ENCODE measurements at regions of chr5 and their contacts with region 1.

Region 1: GRCh38 chr5:111158105-111158744 is 66.0 kb upstream of the CAMK4 start:
- DNase-seq: peak; percentile 65
- H3K4me3 ChIP-seq: no peak overlapping the region
- H3K27ac ChIP-seq: no peak overlapping the region
- H3K4me1 ChIP-seq: no peaks in the 10 kb centered on the region
- H3K27me3 ChIP-seq: no peaks in the 10 kb centered on the region
- CTCF ChIP-seq: peak; percentile 100

Region 2: DNA sequence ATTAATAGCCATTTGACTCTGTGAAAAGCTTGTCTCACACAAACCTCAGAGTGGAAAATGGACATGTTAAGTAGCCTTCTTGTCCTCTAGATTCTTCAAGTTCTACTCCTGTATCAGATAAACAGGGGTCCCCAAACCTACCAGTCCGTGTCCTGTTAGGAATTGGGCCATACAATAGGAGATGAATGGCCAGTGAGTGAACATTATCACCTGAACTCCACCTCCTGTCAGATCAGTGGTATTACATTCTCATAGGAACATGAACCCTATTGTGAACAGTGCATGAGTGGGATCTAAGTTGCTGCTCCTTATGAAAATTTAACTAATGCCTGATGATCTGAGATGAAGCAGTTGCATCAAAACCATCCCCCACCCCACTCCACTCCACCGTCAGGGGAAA is 568.0 kb before region 1 on chr5:
- CTCF ChIA-PET with region 1: no interaction called
- dilution Hi-C with region 1: no loop called
- in situ Hi-C with region 1: no loop called
- intact Hi-C with region 1: no loop called
- DNase-seq: peak; percentile 5
- H3K4me3 ChIP-seq: no peak overlapping the region
- H3K27ac ChIP-seq: no peak overlapping the region
- H3K4me1 ChIP-seq: no peaks in the 10 kb centered on the region
- H3K27me3 ChIP-seq: peaks cover 4% of the 10 kb centered on the region
- CTCF ChIP-seq: peak; percentile 56 to 58

Region 3: DNA sequence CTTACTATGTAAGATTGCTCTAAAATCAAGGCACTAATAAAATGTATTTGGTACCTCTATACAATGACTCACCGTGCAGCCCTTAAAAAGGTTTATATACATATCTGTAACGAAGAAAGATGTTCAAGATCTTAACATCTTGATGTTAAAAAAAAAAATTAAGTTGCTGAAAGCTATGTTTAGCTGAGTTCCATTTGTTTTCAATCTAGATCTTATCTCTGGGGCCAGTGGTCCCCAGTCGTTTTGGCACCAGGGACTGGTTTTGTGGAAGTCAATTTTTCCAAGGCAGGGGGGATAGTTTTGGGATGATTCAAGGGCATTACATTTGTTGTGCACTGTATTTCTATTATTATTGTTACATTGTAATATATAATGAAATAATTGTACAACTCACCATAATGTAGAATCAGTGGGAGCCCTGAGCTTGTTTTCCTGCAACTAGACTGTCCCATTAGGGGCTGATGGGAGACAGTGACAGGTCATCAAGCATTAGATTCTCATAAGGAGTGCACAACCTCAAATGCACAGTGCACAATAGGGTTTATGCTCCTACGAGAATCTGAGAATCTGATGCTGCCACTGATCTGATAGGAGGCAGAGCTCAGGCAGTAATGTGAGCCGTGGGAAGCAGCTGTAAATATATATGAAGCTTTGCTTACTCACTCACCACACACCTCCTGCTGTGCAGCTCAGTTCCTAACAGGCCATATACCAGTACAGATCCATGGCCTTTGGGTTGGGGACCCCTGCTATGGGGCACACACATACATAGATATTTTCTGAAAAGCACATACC is 114.3 kb before region 1 on chr5:
- CTCF ChIA-PET with region 1: no interaction called
- dilution Hi-C with region 1: no loop called
- in situ Hi-C with region 1: no loop called
- intact Hi-C with region 1: no loop called
- DNase-seq: peak; percentile 16
- H3K4me3 ChIP-seq: no peak overlapping the region
- H3K27ac ChIP-seq: no peak overlapping the region
- H3K4me1 ChIP-seq: no peaks in the 10 kb centered on the region
- H3K27me3 ChIP-seq: no peaks in the 10 kb centered on the region
- CTCF ChIP-seq: no peak

Region 4: DNA sequence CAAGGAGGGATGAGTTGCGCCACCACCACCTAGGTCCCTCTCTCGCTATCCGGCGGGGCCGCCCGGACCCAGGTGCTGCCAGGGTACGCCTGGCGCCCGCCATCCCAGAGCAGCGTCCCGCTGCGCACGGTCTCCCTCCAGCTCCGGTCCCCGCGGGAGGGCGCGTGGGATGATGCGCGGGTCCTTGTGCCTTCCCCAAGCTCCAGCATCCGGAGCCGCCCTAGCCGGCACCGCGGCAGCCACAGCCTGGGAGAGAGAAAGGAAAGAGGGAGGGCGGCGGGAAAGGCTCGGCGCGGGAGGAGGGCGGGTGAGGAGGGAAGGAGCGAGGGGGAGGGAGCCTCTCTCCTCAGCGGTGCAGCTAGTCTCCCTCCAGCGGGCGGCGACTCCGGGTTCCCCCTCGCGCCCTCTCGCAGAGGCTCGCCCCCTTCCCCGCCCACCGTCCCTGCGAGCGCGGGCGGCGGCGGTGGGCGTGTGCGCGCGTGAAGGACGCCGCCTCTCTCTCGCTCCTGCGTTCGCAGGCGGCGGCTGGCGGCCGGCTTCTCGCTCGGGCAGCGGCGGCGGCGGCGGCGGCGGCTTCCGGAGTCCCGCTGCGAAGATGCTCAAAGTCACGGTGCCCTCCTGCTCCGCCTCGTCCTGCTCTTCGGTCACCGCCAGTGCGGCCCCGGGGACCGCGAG is 65.8 kb after region 1 on chr5 and contains the start of gene CAMK4:
- CTCF ChIA-PET with region 1: no interaction called
- dilution Hi-C with region 1: no loop called
- in situ Hi-C with region 1: no loop called
- intact Hi-C with region 1: loop called (anchors 5 kb)
- DNase-seq: peak; percentile 81
- H3K4me3 ChIP-seq: peak within 1 kb of the TSS; percentile 73 to 79 (median 77)
- H3K27ac ChIP-seq: no peak within 1 kb of the TSS
- H3K4me1 ChIP-seq: peaks cover 26% of the 10 kb centered on the region
- H3K27me3 ChIP-seq: no peaks in the 10 kb centered on the region
- CTCF ChIP-seq: peak in 1 of 2 donors; percentile 19
- total RNA-seq, gene CAMK4: 1.5 to 9.4 TPM

Region 5: GRCh38 chr5:111278845-111279504 is 120.8 kb after region 1 on chr5:
- CTCF ChIA-PET with region 1: no interaction called
- dilution Hi-C with region 1: no loop called
- in situ Hi-C with region 1: loop called in 1 of 2 experiments (anchors 5 kb)
- intact Hi-C with region 1: loop called (anchors 1 kb)
- DNase-seq: peak; percentile 35
- H3K4me3 ChIP-seq: no peak overlapping the region
- H3K27ac ChIP-seq: no peak overlapping the region
- H3K4me1 ChIP-seq: no peaks in the 10 kb centered on the region
- H3K27me3 ChIP-seq: no peaks in the 10 kb centered on the region
- CTCF ChIP-seq: peak; percentile 82 to 91

Region 6: GRCh38 chr5:111461255-111461671 is 303.0 kb after region 1 on chr5:
- CTCF ChIA-PET with region 1: interaction called, 8 read pairs
- dilution Hi-C with region 1: no loop called
- in situ Hi-C with region 1: loop called (anchors 10 to 25 kb)
- intact Hi-C with region 1: loop called (anchors 1 kb)
- DNase-seq: peak; percentile 38
- H3K4me3 ChIP-seq: no peak overlapping the region
- H3K27ac ChIP-seq: no peak overlapping the region
- H3K4me1 ChIP-seq: no peaks in the 10 kb centered on the region
- H3K27me3 ChIP-seq: no peaks in the 10 kb centered on the region
- CTCF ChIP-seq: peak; percentile 43 to 68

Region 7: DNA sequence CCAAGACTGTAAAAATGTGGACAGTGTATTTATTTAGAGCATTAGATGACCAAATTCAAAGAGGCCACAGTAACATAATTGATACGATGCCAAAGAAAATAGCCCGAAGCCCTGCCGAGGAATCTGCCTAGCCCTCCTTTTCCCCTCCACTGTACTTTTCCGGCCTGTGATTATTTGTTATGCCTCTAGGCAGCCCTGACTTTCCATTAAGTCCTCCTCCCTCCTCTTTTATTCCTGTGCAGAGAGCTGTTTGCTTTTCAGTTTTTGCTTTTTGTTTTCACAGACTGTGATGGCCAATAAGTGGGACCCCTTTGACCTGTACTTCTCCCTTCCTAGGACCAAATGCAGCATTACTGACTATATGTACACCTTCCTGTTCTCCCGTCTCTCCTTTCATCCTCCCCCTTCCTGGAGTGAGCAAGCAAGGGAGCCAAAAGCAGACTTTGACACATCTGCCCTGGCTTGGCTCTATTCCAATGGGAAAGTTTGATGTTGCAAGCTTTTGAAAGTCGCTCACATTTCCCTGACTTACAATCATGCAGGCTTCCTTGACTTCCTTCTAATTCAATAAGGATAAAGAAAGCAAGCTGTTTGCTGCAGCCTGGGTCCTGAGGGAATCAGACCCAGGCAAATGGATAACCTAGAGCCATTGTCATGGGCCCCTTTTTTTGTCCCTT is 522.6 kb after region 1 on chr5:
- CTCF ChIA-PET with region 1: no interaction called
- dilution Hi-C with region 1: no loop called
- in situ Hi-C with region 1: no loop called
- intact Hi-C with region 1: loop called (anchors 5 kb)
- DNase-seq: peak; percentile 96
- H3K4me3 ChIP-seq: no peak overlapping the region
- H3K27ac ChIP-seq: peak overlapping the region; percentile 67
- H3K4me1 ChIP-seq: peaks cover 28% of the 10 kb centered on the region
- H3K27me3 ChIP-seq: no peaks in the 10 kb centered on the region
- CTCF ChIP-seq: no peak

Region 8: GRCh38 chr5:111830333-111830732 is 672.1 kb after region 1 on chr5:
- CTCF ChIA-PET with region 1: interaction called, 3 read pairs
- dilution Hi-C with region 1: no loop called
- in situ Hi-C with region 1: no loop called
- intact Hi-C with region 1: loop called (anchors 5 kb)
- DNase-seq: peak; percentile 94
- H3K4me3 ChIP-seq: no peak overlapping the region
- H3K27ac ChIP-seq: peak overlapping the region; percentile 18
- H3K4me1 ChIP-seq: peaks cover 7% of the 10 kb centered on the region
- H3K27me3 ChIP-seq: peaks cover 13% of the 10 kb centered on the region
- CTCF ChIP-seq: no peak

Measured in mammary epithelial cell (primary cell).